ENCODE measurements at regions of chr16 and their contacts with region 1.

Region 1: GRCh38 chr16:57045694-57046381 is 46.5 kb upstream of the CPNE2 start:
- DNase-seq: peak; percentile 50
- ATAC-seq: no peak
- H3K4me3 Mint-ChIP-seq: no peak overlapping the region
- H3K27ac Mint-ChIP-seq: peak overlapping the region; percentile 70
- H3K4me1 Mint-ChIP-seq: peaks cover 47% of the 10 kb centered on the region
- H3K27me3 Mint-ChIP-seq: no peaks in the 10 kb centered on the region

Region 2: DNA sequence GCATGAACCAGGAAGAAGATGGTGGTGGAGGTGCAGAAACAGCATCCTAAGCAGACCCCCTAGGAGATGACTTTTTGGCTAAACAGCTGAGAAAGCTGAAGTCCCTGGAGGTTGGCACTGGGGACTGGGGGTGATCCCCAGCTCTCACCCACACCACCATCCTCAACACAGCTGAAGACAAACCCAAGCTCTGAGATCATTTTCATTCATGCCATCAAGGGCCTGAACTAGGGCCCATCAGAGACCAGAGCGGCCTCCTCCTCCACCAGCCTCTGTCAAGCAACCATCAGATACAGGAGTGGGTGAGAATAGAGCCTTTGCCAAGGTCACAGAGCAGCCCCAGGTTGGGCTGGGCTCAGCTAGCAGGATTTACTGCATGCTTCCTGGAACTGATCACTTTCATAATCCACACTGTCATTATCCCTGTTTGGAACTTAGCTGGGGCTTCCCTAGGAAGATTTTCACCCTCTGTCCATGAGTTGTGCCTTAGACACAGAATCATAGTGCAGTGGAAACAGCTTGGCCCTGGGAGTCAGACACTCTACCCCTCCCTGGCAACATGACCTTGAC is 476.0 kb before region 1 on chr16:
- CTCF ChIA-PET with region 1: no interaction called
- POLR2A ChIA-PET with region 1: no interaction called
- DNase-seq: no peak
- ATAC-seq: no peak
- H3K4me3 Mint-ChIP-seq: no peak overlapping the region
- H3K27ac Mint-ChIP-seq: no peak overlapping the region
- H3K4me1 Mint-ChIP-seq: peaks cover 3% of the 10 kb centered on the region
- H3K27me3 Mint-ChIP-seq: peaks cover 8% of the 10 kb centered on the region

Region 3: GRCh38 chr16:56994311-56994710 is 51.5 kb before region 1 on chr16:
- CTCF ChIA-PET with region 1: interaction called, 35 read pairs
- POLR2A ChIA-PET with region 1: interaction called, 87 read pairs
- DNase-seq: no peak
- ATAC-seq: peak; percentile 3
- H3K4me3 Mint-ChIP-seq: peak overlapping the region; percentile 68
- H3K27ac Mint-ChIP-seq: peak overlapping the region; percentile 68
- H3K4me1 Mint-ChIP-seq: peaks cover 75% of the 10 kb centered on the region
- H3K27me3 Mint-ChIP-seq: no peaks in the 10 kb centered on the region

Region 4: GRCh38 chr16:57013229-57013628 is 32.6 kb before region 1 on chr16:
- CTCF ChIA-PET with region 1: interaction called, 8 read pairs
- POLR2A ChIA-PET with region 1: interaction called, 14 read pairs
- DNase-seq: no peak
- ATAC-seq: no peak
- H3K4me3 Mint-ChIP-seq: peak overlapping the region; percentile 59
- H3K27ac Mint-ChIP-seq: peak overlapping the region; percentile 83
- H3K4me1 Mint-ChIP-seq: peaks cover 82% of the 10 kb centered on the region
- H3K27me3 Mint-ChIP-seq: no peaks in the 10 kb centered on the region

Region 5: DNA sequence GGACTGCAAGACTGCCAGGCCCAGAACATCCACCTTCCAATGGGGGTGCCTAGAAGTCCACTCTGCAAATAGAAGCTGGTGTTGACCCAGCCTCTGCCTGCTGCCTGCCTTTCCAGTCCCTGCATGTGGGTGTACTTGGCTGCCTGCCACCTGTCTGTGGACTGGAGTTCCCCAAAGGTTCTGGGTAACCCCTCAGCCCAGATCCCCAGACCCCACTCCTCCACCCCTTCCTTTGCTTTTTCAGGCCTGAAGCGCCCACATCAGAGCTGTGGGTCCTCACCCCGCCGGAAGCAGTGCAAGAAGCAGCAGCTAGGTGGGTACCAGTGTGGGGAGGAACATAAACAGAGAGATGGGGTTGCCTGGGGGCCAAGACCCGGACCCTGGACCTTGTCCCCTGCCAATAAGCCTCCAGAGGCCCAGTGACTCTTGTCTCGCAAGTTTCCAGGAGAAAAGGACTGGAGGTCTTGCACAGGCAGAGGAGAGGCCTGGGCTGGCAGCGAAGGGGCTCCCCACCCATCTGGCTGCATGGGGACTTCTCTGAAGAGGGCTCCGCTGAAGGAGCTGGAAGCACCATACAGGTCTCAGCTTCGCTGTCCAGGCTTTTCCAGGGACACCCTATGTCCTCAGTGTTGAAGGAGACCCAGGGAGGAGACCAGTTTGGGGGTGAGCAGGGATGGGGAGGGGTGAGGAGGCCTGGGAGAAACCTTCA is 22.1 kb before region 1 on chr16:
- CTCF ChIA-PET with region 1: interaction called, 55 read pairs
- POLR2A ChIA-PET with region 1: interaction called, 68 read pairs
- DNase-seq: peak; percentile 76
- ATAC-seq: peak; percentile 81
- H3K4me3 Mint-ChIP-seq: peak overlapping the region; percentile 41
- H3K27ac Mint-ChIP-seq: peak overlapping the region; percentile 73
- H3K4me1 Mint-ChIP-seq: peaks cover 82% of the 10 kb centered on the region
- H3K27me3 Mint-ChIP-seq: no peaks in the 10 kb centered on the region

Region 6: DNA sequence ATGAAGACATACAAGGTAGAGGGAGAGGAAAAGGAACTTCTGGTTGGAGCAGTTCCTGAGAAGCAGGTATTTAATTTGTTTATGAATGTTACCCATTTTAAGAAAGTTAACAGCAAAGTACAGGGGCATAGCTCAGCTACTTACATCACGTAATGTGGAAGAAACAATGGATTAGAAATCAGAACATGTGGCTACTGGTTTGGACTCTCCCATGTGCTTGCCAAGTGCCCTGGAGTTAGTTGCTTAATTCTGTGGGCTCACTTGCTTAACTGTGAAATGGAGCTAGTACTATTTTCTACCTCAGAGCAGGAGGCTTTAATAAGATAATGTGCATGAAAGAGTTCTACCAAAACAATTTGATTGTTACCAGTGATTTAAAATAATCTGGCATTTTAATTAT is 167.6 kb after region 1 on chr16:
- CTCF ChIA-PET with region 1: no interaction called
- POLR2A ChIA-PET with region 1: no interaction called
- DNase-seq: no peak
- ATAC-seq: no peak
- H3K4me3 Mint-ChIP-seq: no peak overlapping the region
- H3K27ac Mint-ChIP-seq: no peak overlapping the region
- H3K4me1 Mint-ChIP-seq: no peaks in the 10 kb centered on the region
- H3K27me3 Mint-ChIP-seq: no peaks in the 10 kb centered on the region